GM12878 (cell line): ENCODE measurements at regions of chr9 and their contacts with region 1.

Region 1: GRCh38 chr9:99948896-99949295 is 42.4 kb downstream of the STX17 start:
- DNase-seq: no peak
- ATAC-seq: no peak
- H3K4me3 ChIP-seq: no peak overlapping the region
- H3K27ac ChIP-seq: no peak overlapping the region
- H3K4me1 ChIP-seq: peaks cover 7% of the 10 kb centered on the region; the same call in 1 of the 2 replicates
- H3K27me3 ChIP-seq: no peaks in the 10 kb centered on the region
- CTCF ChIP-seq: no peak
- EP300 ChIP-seq: no peak
- POLR2A ChIP-seq: no peak
- RAD21 ChIP-seq: no peak

Region 2: GRCh38 chr9:99980598-99980997 is 31.7 kb after region 1 on chr9:
- CTCF ChIA-PET with region 1: no interaction called
- POLR2A ChIA-PET with region 1: no interaction called
- RAD21 ChIA-PET with region 1: no interaction called
- SMC1A ChIA-PET with region 1: interaction called, 10 read pairs
- in situ Hi-C with region 1: no loop called
- intact Hi-C with region 1: no loop called
- DNase-seq: no peak
- ATAC-seq: no peak
- H3K4me3 ChIP-seq: no peak overlapping the region
- H3K27ac ChIP-seq: no peak overlapping the region
- H3K4me1 ChIP-seq: no peaks in the 10 kb centered on the region
- H3K27me3 ChIP-seq: no peaks in the 10 kb centered on the region
- CTCF ChIP-seq: no peak
- EP300 ChIP-seq: no peak
- POLR2A ChIP-seq: no peak
- RAD21 ChIP-seq: no peak